ENCODE measurements at regions of chr1 and their contacts with region 1.

Region 1: GRCh38 chr1:117758444-117759316 is 152.8 kb downstream of the TENT5C start:
- DNase-seq: peak; percentile 71 to 91 (median 79)
- H3K4me3 ChIP-seq: peak overlapping the region in 1 of 4 donors; percentile 49
- H3K27ac ChIP-seq: no peak overlapping the region
- H3K4me1 ChIP-seq: peaks cover 0 to 6% of the 10 kb centered on the region in 2 donors
- H3K27me3 ChIP-seq: no peaks in the 10 kb centered on the region
- CTCF ChIP-seq: peak; percentile 80 to 92 (median 84)
- POLR2A ChIP-seq: no peak

Region 2: GRCh38 chr1:117250061-117250606 is 508.5 kb before region 1 on chr1:
- intact Hi-C with region 1: no loop called
- DNase-seq: no peak
- H3K4me3 ChIP-seq: no peak overlapping the region
- H3K27ac ChIP-seq: no peak overlapping the region
- H3K4me1 ChIP-seq: no peaks in the 10 kb centered on the region
- H3K27me3 ChIP-seq: no peaks in the 10 kb centered on the region
- CTCF ChIP-seq: no peak
- POLR2A ChIP-seq: no peak

Region 3: DNA sequence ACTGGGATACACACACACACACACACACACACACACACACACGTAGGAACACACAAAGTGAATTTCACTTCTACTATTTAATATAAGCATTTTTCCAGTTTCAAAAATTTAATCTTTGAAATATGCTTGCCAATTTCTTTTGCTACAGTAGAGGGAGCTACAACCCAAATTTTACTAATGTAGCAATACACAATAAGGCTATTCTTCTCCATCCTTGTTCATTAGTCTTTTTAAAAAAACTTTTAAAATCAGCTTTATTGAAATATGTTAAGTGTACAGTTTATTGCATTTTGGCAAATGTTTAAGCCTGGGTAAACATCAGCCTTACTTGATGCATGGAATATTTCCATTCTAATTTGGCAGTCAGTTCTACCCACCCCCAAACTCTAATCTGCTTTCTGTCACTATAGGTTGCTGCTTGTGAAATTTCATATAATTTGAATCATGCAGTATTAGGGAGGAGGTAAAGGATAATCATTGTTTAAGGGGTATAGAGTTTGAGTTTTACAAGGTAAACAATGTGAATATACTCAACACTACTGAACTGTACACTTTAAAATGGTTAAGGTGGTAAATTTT is 245.8 kb before region 1 on chr1:
- intact Hi-C with region 1: loop called (anchors 5 kb)
- DNase-seq: no peak
- H3K4me3 ChIP-seq: no peak overlapping the region
- H3K27ac ChIP-seq: no peak overlapping the region
- H3K4me1 ChIP-seq: no peaks in the 10 kb centered on the region
- H3K27me3 ChIP-seq: no peaks in the 10 kb centered on the region
- CTCF ChIP-seq: peak; percentile 36 to 77 (median 56)
- POLR2A ChIP-seq: no peak

Region 4: DNA sequence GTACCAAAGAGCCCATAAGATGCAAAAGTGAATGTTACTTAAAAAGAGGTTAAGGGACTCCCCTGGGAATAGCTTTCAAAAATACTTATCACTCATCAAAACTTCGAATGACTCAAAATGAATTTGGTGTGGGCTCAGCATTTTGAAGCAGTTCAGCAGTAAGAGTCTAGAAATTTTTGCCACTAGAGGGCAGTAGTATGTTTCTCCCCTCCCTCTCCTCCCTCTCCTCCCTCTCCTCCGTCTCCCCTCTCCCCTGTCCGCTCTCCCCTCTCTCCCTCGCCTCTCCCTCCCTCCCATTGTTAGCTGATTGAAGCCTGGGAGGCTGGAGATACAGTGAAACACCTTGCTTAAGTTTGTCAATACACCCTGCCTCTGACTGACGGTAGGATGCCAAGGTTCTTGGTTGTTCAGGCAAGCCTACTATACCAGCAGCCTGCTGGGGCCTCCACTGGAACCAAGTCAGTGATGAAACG is 223.6 kb before region 1 on chr1:
- intact Hi-C with region 1: loop called (anchors 5 kb)
- DNase-seq: peak in 5 of 7 donors; percentile 13 to 30 (median 27)
- H3K4me3 ChIP-seq: no peak overlapping the region
- H3K27ac ChIP-seq: no peak overlapping the region
- H3K4me1 ChIP-seq: no peaks in the 10 kb centered on the region
- H3K27me3 ChIP-seq: no peaks in the 10 kb centered on the region
- CTCF ChIP-seq: peak; percentile 48 to 77 (median 64)
- POLR2A ChIP-seq: no peak

Region 5: GRCh38 chr1:117605774-117606648 is 152.7 kb before region 1 on chr1 and contains the start of gene TENT5C:
- intact Hi-C with region 1: loop called in 1 of 2 experiments (anchors 5 kb)
- DNase-seq: peak; percentile 97 to 99 (median 98)
- H3K4me3 ChIP-seq: peak within 1 kb of the TSS; percentile 45 to 93 (median 80)
- H3K27ac ChIP-seq: peak within 1 kb of the TSS; percentile 15 to 78 (median 69)
- H3K4me1 ChIP-seq: peaks cover 0 to 17% of the 10 kb centered on the region in 2 donors
- H3K27me3 ChIP-seq: no peaks in the 10 kb centered on the region
- CTCF ChIP-seq: peak in 1 of 6 experiments; percentile 16
- POLR2A ChIP-seq: peak; percentile 46 to 85
- total RNA-seq, gene TENT5C: 1.5 to 8.5 (median 2.1) TPM

Measured in adrenal gland (tissue), 19 donors.